IMR-90 (cell line): ENCODE measurements at regions of chr11 and their contacts with region 1.

Region 1: DNA sequence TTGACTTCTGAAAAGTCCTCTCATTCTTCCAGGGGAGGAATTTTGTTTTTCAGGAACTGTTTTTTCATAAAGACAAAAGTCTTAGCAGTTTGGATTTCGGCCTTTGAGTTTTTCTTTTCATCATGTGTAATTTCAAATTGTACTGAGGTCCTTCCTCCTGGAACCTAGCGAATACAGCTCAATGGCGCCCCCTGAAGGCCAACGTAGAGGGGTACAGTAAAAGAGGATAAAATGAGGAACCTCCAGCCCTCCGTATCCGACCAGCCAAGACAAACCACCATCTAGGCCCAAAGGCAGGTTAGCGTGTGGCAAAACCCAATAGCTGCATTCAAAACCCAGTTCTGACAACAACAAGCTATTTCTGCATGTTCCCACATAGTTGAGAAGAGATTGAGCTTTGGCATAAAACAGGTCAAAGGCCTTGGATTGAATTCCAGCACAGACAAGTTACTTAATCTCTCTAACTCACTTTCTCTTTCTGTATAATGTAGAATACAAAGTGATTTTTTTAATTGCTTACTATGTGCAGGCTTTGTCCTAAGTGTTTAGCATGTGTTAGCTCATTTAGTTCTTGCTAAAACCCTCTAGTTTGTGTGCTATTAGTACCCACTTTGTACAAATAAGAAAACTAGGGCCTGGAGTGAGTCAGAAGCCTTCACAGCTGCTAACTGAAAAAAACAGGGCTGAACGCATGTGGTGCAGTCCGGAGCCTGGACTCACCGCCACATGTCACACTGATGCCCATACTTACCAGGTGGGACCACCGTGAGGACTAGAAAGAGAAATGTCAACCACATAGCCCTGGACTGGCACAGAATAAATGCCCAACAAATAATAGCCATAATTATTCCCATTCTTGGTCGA is 43.2 kb upstream of the ETS1 start:
- DNase-seq: peak; percentile 86
- ATAC-seq: peak; percentile 96
- H3K4me3 ChIP-seq: no peak overlapping the region
- H3K27ac ChIP-seq: no peak overlapping the region
- H3K4me1 ChIP-seq: no peaks in the 10 kb centered on the region
- H3K27me3 ChIP-seq: peaks cover 4% of the 10 kb centered on the region
- CTCF ChIP-seq: peak; percentile 97
- POLR2A ChIP-seq: no peak
- RAD21 ChIP-seq: peak; percentile 97

Region 2: GRCh38 chr11:128026596-128026995 is 604.0 kb before region 1 on chr11:
- CTCF ChIA-PET with region 1: no interaction called
- POLR2A ChIA-PET with region 1: no interaction called
- dilution Hi-C with region 1: no loop called
- in situ Hi-C with region 1: loop called (anchors 10 kb)
- intact Hi-C with region 1: loop called (anchors 1 kb)
- DNase-seq: peak; percentile 98
- ATAC-seq: peak; percentile 88
- H3K4me3 ChIP-seq: no peak overlapping the region
- H3K27ac ChIP-seq: no peak overlapping the region
- H3K4me1 ChIP-seq: peaks cover 9% of the 10 kb centered on the region
- H3K27me3 ChIP-seq: no peaks in the 10 kb centered on the region
- CTCF ChIP-seq: no peak
- POLR2A ChIP-seq: no peak
- RAD21 ChIP-seq: no peak

Region 3: GRCh38 chr11:128069665-128070064 is 560.9 kb before region 1 on chr11:
- CTCF ChIA-PET with region 1: no interaction called
- POLR2A ChIA-PET with region 1: no interaction called
- dilution Hi-C with region 1: no loop called
- in situ Hi-C with region 1: no loop called
- intact Hi-C with region 1: no loop called
- DNase-seq: no peak
- ATAC-seq: no peak
- H3K4me3 ChIP-seq: no peak overlapping the region
- H3K27ac ChIP-seq: no peak overlapping the region
- H3K4me1 ChIP-seq: no peaks in the 10 kb centered on the region
- H3K27me3 ChIP-seq: peaks cover 10% of the 10 kb centered on the region
- CTCF ChIP-seq: no peak
- POLR2A ChIP-seq: no peak
- RAD21 ChIP-seq: no peak

Region 4: GRCh38 chr11:128172046-128172878 is 458.3 kb before region 1 on chr11:
- CTCF ChIA-PET with region 1: interaction called, 24 read pairs
- POLR2A ChIA-PET with region 1: no interaction called
- dilution Hi-C with region 1: loop called (anchors 25 kb)
- in situ Hi-C with region 1: loop called (anchors 5 kb)
- intact Hi-C with region 1: loop called (anchors 1 kb)
- DNase-seq: peak; percentile 86
- ATAC-seq: peak; percentile 87
- H3K4me3 ChIP-seq: no peak overlapping the region
- H3K27ac ChIP-seq: no peak overlapping the region
- H3K4me1 ChIP-seq: peaks cover 2% of the 10 kb centered on the region; the same call in 1 of the 2 replicates
- H3K27me3 ChIP-seq: peaks cover 7% of the 10 kb centered on the region
- CTCF ChIP-seq: peak; percentile 92
- POLR2A ChIP-seq: peak; percentile 37; the same call in 1 of the 2 replicates
- RAD21 ChIP-seq: peak; percentile 95

Region 5: DNA sequence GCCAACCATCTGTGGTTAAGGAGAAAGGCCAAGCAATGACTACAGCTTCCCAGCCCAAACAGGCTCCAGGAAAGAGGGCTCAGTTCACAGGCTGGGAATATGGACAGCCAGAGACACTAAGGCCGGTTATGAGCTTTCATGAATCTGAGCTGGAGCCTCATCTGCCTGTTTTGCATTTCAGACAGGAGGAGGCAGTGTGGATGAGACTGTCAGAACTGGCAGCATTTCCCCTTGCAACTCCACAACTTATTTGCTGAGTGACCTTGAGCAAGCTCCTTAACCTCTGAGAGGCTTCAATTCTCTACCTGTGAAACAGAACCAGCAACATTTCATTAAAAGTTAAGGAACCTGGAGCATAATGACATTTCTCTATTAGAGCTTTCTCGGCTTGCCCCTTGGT is 307.2 kb before region 1 on chr11:
- CTCF ChIA-PET with region 1: interaction called, 3 read pairs
- POLR2A ChIA-PET with region 1: no interaction called
- dilution Hi-C with region 1: no loop called
- in situ Hi-C with region 1: no loop called
- intact Hi-C with region 1: loop called (anchors 1 kb)
- DNase-seq: peak; percentile 48
- ATAC-seq: peak; percentile 79
- H3K4me3 ChIP-seq: no peak overlapping the region
- H3K27ac ChIP-seq: no peak overlapping the region
- H3K4me1 ChIP-seq: no peaks in the 10 kb centered on the region
- H3K27me3 ChIP-seq: no peaks in the 10 kb centered on the region
- CTCF ChIP-seq: peak; percentile 48
- POLR2A ChIP-seq: no peak
- RAD21 ChIP-seq: peak; percentile 51

Region 6: DNA sequence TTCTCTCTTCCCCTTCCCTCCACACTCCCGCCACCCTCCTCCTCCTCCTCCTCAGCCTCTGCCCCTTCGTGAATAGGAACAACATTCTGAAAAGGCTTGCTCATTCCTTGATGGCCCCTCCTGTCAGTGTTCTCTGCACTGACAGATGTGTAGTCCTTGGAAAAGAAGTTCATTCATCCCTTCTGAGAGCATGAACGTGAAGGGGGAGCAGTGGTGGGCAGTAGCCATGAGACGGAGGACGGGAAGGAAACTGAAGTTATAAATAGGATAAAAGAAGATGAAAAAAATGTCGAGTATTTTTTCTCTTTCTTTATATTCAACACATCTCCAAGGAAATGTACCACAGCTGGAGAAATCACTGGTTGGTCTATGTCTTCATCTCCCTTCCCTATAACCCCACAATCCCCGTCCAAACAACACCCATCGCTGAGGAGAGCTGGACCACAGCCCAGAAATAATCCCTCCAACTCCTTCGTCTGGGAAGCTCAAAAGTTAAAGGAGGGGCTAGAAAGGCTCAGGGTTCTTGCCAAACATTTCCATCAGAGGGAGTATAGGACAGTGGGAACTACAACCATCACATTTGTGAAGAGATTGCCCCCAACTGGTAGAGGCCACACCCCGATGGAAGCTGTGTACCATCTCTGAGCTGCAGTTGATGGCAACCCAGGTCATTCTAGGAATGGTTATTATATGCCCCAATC is 76.8 kb before region 1 on chr11:
- CTCF ChIA-PET with region 1: interaction called, 8 read pairs
- POLR2A ChIA-PET with region 1: no interaction called
- dilution Hi-C with region 1: no loop called
- in situ Hi-C with region 1: no loop called
- intact Hi-C with region 1: loop called (anchors 2 kb)
- DNase-seq: peak; percentile 32
- ATAC-seq: 0 out of 2 replicates have a peak, but pooled peaks have one; percentile 25
- H3K4me3 ChIP-seq: no peak overlapping the region
- H3K27ac ChIP-seq: no peak overlapping the region
- H3K4me1 ChIP-seq: peaks cover 5% of the 10 kb centered on the region; the same call in 1 of the 2 replicates
- H3K27me3 ChIP-seq: peaks cover 2% of the 10 kb centered on the region; the same call in 1 of the 2 replicates
- CTCF ChIP-seq: no peak
- POLR2A ChIP-seq: no peak
- RAD21 ChIP-seq: no peak